ENCODE measurements at regions of chr1 and their contacts with region 1.

Region 1: DNA sequence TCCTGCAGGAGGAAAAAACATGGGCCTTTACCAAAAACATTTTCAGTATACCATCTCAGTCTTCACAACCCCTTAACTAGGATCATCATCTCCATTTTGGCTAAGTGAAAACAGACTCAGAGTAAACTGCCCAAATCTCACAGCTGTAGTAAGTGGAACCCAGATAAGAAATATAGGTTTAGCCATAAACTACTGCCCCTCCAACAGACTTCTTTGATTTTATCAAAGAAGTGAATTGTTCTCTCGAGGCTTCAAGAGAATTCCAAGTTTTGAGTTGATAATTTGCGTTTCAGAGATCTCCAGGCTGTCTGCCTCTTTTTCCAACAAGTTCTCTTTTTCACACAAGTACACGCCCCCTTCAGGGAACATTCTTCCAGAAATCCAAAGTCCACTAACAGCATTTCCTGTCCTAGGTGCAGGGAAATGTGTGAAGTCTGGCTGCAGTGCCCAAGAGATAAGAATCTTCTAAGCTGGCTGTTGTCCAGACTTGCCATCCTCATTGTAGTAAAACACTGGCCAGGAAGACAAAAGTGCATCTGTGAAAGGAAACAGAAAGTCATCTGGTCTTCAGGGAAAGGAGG is 30.8 kb downstream of the RNF19B start:
- DNase-seq: no peak
- H3K4me3 ChIP-seq: no peak overlapping the region
- H3K27ac ChIP-seq: no peak overlapping the region
- H3K27me3 ChIP-seq: peaks cover 2% of the 10 kb centered on the region
- CTCF ChIP-seq: no peak

Region 2: DNA sequence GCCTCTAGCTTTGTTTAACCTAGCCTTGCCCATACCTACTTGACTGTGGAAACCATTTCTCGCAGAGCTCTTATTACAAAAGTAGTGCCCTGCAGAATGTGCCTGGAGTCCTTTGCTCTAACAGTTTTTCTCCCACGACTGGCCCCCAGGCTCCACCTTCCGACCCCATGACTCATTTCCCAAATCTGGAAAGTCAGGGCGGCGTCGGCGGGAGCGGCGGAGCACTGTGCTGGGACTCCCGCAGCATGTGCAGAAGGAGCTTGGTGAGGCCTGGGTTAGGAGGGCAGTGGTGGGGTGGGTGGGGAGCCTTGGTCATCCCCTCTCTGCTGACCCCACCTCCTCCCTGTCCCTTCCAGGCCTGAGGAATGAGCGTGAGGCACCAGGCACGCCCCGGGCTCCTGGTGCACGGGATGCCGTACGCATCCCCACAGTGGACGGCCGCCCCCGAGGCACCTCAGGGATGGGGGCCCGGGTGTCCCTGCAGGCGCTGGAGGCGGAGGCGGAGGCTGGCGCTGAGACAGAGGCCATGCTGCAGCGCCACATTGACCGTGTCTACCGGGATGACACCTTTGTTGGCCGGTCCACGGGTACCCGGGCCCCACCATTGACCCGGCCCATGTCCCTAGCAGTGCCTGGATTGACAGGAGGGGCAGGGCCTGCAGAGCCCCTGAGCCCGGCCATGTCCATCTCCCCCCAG is 164.2 kb before region 1 on chr1:
- CTCF ChIA-PET with region 1: no interaction called
- POLR2A ChIA-PET with region 1: no interaction called
- DNase-seq: no peak
- H3K4me3 ChIP-seq: no peak overlapping the region
- H3K27ac ChIP-seq: no peak overlapping the region
- H3K27me3 ChIP-seq: peaks cover 2% of the 10 kb centered on the region
- CTCF ChIP-seq: no peak

Region 3: GRCh38 chr1:32919811-32920733 is 13.8 kb before region 1 on chr1:
- CTCF ChIA-PET with region 1: interaction called, 11 read pairs
- POLR2A ChIA-PET with region 1: no interaction called
- DNase-seq: peak; percentile 16
- H3K4me3 ChIP-seq: no peak overlapping the region
- H3K27ac ChIP-seq: peak overlapping the region; percentile 68
- H3K27me3 ChIP-seq: no peaks in the 10 kb centered on the region
- CTCF ChIP-seq: no peak

Region 4: GRCh38 chr1:33007190-33008050 is 73.6 kb after region 1 on chr1:
- CTCF ChIA-PET with region 1: interaction called, 155 read pairs
- POLR2A ChIA-PET with region 1: interaction called, 3 read pairs
- DNase-seq: peak; percentile 79
- H3K4me3 ChIP-seq: no peak overlapping the region
- H3K27ac ChIP-seq: no peak overlapping the region
- H3K27me3 ChIP-seq: no peaks in the 10 kb centered on the region
- CTCF ChIP-seq: peak; percentile 80

Region 5: DNA sequence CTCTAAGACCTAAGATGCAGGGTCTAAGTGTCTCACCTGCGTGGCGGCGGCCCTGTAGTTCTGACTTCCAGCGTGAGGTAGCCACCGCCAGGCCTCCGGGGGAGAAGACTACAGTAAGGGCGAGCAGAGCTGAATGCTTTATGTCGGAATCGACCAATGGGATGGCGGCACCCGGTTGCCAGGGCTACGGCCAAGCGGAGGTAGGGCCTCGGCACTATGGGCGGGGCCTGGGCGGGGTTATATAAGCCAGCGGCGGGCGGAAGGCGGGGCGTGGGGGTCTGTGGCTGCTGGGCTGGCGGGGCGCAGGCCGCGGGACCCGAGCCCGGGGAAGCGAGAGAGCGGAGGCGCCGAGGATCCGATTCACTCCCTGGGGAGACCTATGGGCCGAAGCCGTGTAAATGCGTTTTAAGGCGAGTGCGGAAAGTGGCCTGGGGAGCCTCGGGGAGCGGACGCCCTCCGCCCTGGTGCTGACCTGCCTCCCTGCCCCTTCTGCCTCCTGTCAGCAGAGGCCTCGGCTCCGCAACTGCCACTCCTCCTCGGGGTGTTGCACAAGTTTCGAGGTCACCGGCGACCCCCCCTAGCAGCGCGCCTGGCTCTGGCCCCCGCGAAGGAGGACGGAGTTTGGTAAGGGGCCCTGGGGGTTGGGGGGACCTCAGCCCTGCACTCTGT is 147.2 kb after region 1 on chr1 and contains the start of gene AZIN2:
- CTCF ChIA-PET with region 1: interaction called, 41 read pairs
- POLR2A ChIA-PET with region 1: no interaction called
- DNase-seq: peak; percentile 86
- H3K4me3 ChIP-seq: peak within 1 kb of the TSS; percentile 95
- H3K27ac ChIP-seq: no peak within 1 kb of the TSS
- H3K27me3 ChIP-seq: no peaks in the 10 kb centered on the region
- CTCF ChIP-seq: no peak
- polyA plus RNA-seq, gene AZIN2: 7.0 and 7.8 TPM in 2 replicates

Region 6: GRCh38 chr1:33367485-33368405 is 433.9 kb after region 1 on chr1:
- CTCF ChIA-PET with region 1: no interaction called
- POLR2A ChIA-PET with region 1: no interaction called
- DNase-seq: no peak
- H3K4me3 ChIP-seq: no peak overlapping the region
- H3K27ac ChIP-seq: no peak overlapping the region
- H3K27me3 ChIP-seq: no peaks in the 10 kb centered on the region
- CTCF ChIP-seq: peak; percentile 97

Measured in AG04450 (cell line).